ENCODE measurements at regions of chr3 and their contacts with region 1.

Region 1: DNA sequence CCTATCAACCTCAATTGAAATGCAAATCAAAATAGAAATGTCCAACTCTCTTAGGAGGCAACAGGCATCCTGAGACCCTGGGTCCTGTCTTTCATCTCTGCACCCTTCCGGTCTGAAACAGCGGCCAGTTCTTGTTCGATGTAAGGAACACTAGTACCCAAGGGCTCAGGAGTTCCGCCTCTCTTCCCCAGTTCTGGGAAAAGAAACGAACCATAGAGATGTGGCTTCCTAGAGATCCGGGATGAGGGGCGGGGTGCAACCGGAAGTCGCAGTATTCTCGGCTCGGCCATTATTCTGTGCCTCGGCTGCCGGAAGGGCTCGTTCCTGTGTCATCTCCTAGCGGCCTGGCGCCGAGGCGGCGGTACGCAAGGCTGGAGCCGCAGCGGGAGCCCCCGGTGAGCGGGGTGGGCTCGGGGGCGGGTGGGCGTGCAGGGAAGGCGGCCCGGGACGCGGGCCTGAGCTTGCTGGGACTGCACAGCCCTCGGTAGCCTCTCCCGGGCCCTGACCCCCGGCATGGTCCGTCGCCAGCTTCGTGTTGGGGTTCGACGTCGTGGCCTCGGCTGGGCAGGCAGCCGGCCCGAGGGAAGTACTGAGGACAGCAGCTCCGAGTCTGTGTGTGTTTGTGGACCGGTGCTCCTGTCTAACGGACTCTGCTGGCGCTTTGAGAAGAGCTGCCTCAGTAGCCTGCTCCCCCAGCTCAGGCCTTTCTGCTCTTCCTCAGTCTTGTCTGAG is at the start of gene ZNF197:
- DNase-seq: peak; percentile 86 to 92
- ATAC-seq: peak; percentile 95 to 99 (median 98)
- H3K4me3 ChIP-seq: peak within 1 kb of the TSS; percentile 97
- H3K27ac ChIP-seq: peak within 1 kb of the TSS; percentile 96
- H3K4me1 ChIP-seq: peaks cover 13% of the 10 kb centered on the region
- H3K27me3 ChIP-seq: no peaks in the 10 kb centered on the region
- CTCF ChIP-seq: peak; percentile 9
- total RNA-seq, gene ZNF197: 15.1 to 19.1 (median 15.9) TPM

Region 2: GRCh38 chr3:44510000-44510368 is 114.9 kb before region 1 on chr3:
- intact Hi-C with region 1: loop called in 1 of 2 experiments (anchors 5 kb)
- DNase-seq: no peak
- ATAC-seq: peak in 2 of 4 donors; percentile 5 to 38
- H3K4me3 ChIP-seq: peak overlapping the region; percentile 86
- H3K27ac ChIP-seq: peak overlapping the region; percentile 85
- H3K4me1 ChIP-seq: peaks cover 19% of the 10 kb centered on the region
- H3K27me3 ChIP-seq: no peaks in the 10 kb centered on the region
- CTCF ChIP-seq: no peak

Region 3: GRCh38 chr3:44647771-44648170 is 22.9 kb after region 1 on chr3:
- intact Hi-C with region 1: loop called in 1 of 2 experiments (anchors 2 kb)
- DNase-seq: no peak
- ATAC-seq: no peak
- H3K4me3 ChIP-seq: no peak overlapping the region
- H3K27ac ChIP-seq: no peak overlapping the region
- H3K4me1 ChIP-seq: peaks cover 8% of the 10 kb centered on the region
- H3K27me3 ChIP-seq: no peaks in the 10 kb centered on the region
- CTCF ChIP-seq: no peak

Region 4: GRCh38 chr3:44712455-44713075 is 87.7 kb after region 1 on chr3 and contains the start of gene ZNF502:
- intact Hi-C with region 1: loop called in 1 of 2 experiments (anchors 10 kb)
- DNase-seq: peak; percentile 91 to 94
- ATAC-seq: peak; percentile 92 to 100 (median 98)
- H3K4me3 ChIP-seq: peak within 1 kb of the TSS; percentile 92
- H3K27ac ChIP-seq: peak within 1 kb of the TSS; percentile 80
- H3K4me1 ChIP-seq: no peaks in the 10 kb centered on the region
- H3K27me3 ChIP-seq: peaks cover 0 to 6% (median 0%) of the 10 kb centered on the region in 3 donors
- CTCF ChIP-seq: peak; percentile 36
- total RNA-seq, gene ZNF502: 3.2 to 4.0 (median 3.7) TPM